CD14-positive monocyte (primary cell): ENCODE measurements at regions of chr22 and their contacts with region 1.

Region 1: DNA sequence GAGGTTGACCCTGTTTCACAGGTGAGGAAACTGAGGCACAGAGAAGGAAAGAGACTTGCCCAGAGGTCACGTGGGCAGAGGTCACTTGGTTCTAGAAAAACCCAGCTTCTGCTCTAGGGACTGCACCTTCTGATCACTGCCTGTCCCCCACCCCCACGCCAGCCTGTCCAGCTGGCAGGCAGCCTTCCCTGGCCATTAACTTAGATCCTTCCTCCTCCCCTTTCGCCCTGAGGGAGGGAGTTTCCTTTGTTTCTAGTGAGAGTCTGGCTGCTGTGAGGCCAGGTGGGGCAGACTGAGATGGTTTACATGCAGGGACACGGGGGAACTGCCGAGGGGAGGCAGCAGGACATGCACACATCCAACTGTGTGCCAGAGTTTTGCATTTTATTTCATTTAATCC is 3.2 kb downstream of the FAM83F start:
- DNase-seq: no peak
- H3K4me3 ChIP-seq: no peak overlapping the region
- H3K4me3 Mint-ChIP-seq: no peak overlapping the region
- H3K27ac ChIP-seq: no peak overlapping the region
- H3K27ac Mint-ChIP-seq: no peak overlapping the region
- H3K4me1 ChIP-seq: peaks cover 7 to 13% of the 10 kb centered on the region in 2 donors
- H3K4me1 Mint-ChIP-seq: peaks cover 12% of the 10 kb centered on the region
- H3K27me3 ChIP-seq: peaks cover 29 to 54% of the 10 kb centered on the region in 2 donors
- H3K27me3 Mint-ChIP-seq: peaks cover 48 to 72% (median 58%) of the 10 kb centered on the region in 3 donors
- CTCF ChIP-seq: no peak

Region 2: GRCh38 chr22:39932918-39933649 is 64.9 kb before region 1 on chr22:
- intact Hi-C with region 1: loop called in 1 of 2 experiments (anchors 10 kb)
- DNase-seq: peak in 2 of 3 donors; percentile 26 to 30
- H3K4me3 ChIP-seq: no peak overlapping the region
- H3K4me3 Mint-ChIP-seq: no peak overlapping the region
- H3K27ac ChIP-seq: no peak overlapping the region
- H3K27ac Mint-ChIP-seq: no peak overlapping the region
- H3K4me1 ChIP-seq: peaks cover 21 to 33% of the 10 kb centered on the region in 2 donors
- H3K4me1 Mint-ChIP-seq: peaks cover 21% of the 10 kb centered on the region
- H3K27me3 ChIP-seq: peaks cover 4 to 14% of the 10 kb centered on the region in 2 donors
- H3K27me3 Mint-ChIP-seq: peaks cover 22 to 26% (median 24%) of the 10 kb centered on the region in 3 donors
- CTCF ChIP-seq: peak; percentile 75

Region 3: GRCh38 chr22:39967103-39967829 is 30.7 kb before region 1 on chr22:
- intact Hi-C with region 1: loop called in 1 of 2 experiments (anchors 5 kb)
- DNase-seq: no peak
- H3K4me3 ChIP-seq: no peak overlapping the region
- H3K4me3 Mint-ChIP-seq: peak overlapping the region in 1 of 2 donors; percentile 40
- H3K27ac ChIP-seq: no peak overlapping the region
- H3K27ac Mint-ChIP-seq: no peak overlapping the region
- H3K4me1 ChIP-seq: peaks cover 7 to 9% of the 10 kb centered on the region in 2 donors
- H3K4me1 Mint-ChIP-seq: peaks cover 11% of the 10 kb centered on the region
- H3K27me3 ChIP-seq: peaks cover 21 to 65% of the 10 kb centered on the region in 2 donors
- H3K27me3 Mint-ChIP-seq: peaks cover 60 to 74% (median 70%) of the 10 kb centered on the region in 3 donors
- CTCF ChIP-seq: no peak